ENCODE measurements at regions of chr1 and their contacts with region 1.

Region 1: DNA sequence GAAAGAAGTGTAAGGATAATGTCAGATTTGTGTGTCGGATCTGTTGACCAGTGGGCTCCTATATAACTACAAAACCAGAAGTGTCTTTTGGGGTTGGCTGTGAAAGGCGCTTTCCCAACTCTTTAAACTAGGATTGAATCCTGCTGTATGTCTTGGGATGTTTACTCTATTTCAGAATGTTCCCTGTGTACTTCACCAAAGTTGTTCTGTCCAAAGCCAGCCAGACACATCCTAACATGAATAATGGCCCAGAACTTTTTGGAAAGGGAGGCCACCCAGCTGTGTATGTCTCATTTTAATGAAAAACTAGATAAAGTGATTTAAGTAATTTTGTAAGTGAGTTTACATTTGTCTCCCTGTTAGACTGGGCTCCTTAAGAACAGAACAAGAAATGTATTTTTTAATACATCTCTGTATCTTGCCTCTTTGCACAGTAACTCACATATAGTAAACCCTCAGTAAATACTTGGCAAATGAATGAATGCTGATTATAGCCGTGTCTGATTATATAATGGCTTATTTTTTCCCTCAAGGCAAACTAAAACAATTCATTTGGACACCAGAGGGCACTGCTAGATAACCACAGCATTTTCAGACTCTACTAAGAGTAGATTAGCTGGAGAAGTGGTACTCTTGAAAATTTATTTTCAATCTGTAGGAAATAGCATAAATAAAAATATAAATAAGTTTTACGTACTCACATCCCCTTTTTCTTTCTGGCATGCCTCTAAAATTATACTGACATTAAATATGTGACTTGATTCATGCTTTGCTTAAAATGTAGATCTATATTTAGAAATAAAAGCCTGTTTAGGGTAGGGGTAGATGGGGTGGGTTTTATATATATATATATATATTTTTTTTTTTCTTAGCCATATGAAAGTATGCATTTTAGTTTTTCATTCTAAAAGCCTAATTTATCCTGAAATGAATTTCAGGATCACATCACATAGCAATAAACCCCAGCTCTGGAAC is 23.8 kb downstream of the TSEN15 start:
- DNase-seq: peak in 4 of 14 experiments; percentile 19 to 53 (median 50)
- ATAC-seq: peak; percentile 34
- H3K4me3 ChIP-seq: no peak overlapping the region
- H3K4me3 Mint-ChIP-seq: no peak overlapping the region
- H3K27ac ChIP-seq: no peak overlapping the region
- H3K27ac Mint-ChIP-seq: peak overlapping the region; percentile 25
- H3K4me1 ChIP-seq: no peaks in the 10 kb centered on the region
- H3K4me1 Mint-ChIP-seq: no peaks in the 10 kb centered on the region
- H3K27me3 ChIP-seq: no peaks in the 10 kb centered on the region
- H3K27me3 Mint-ChIP-seq: no peaks in the 10 kb centered on the region
- CTCF ChIP-seq: peak; percentile 56

Region 2: GRCh38 chr1:183148599-183148998 is 926.7 kb before region 1 on chr1:
- CTCF ChIA-PET with region 1: no interaction called
- POLR2A ChIA-PET with region 1: no interaction called
- intact Hi-C with region 1: no loop called
- DNase-seq: no peak
- ATAC-seq: no peak
- H3K4me3 ChIP-seq: no peak overlapping the region
- H3K4me3 Mint-ChIP-seq: no peak overlapping the region
- H3K27ac ChIP-seq: no peak overlapping the region
- H3K27ac Mint-ChIP-seq: no peak overlapping the region
- H3K4me1 ChIP-seq: no peaks in the 10 kb centered on the region
- H3K4me1 Mint-ChIP-seq: no peaks in the 10 kb centered on the region
- H3K27me3 ChIP-seq: peaks cover 0 to 5% of the 10 kb centered on the region in 2 experiments
- H3K27me3 Mint-ChIP-seq: peaks cover 10% of the 10 kb centered on the region
- CTCF ChIP-seq: no peak

Region 3: DNA sequence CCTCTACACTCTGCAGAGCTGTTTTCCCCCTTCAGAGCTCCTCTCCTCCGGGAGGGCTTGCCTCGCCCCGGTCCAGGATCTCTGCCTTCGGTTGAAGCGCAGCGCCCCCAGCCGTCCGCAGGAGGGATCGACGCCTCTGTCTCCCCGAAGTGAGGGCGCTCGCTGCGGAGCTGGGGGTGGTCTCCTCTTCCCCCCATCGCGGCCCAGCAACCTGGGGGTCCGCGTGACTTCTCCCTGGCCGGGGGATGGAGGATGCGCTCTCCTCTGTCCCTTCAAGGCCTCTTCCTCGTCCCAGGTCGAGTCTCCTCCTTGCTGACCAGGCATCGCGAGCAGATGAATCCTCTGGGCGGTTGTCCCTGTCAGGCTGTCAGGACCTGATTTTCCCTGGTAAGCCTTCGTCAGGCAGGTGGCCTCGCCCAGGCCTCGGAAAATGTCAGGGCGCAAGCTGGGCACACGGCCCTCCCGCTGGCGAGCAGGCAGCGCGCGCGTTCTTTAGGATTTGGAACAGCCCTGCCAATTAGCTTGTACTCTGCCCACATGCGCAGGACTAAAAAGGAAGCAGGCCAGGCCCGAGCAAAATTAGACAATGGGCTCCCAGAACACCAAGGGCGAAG is 588.8 kb after region 1 on chr1:
- CTCF ChIA-PET with region 1: no interaction called
- POLR2A ChIA-PET with region 1: no interaction called
- intact Hi-C with region 1: loop called in 1 of 2 experiments (anchors 10 kb)
- DNase-seq: peak in 7 of 14 experiments; percentile 1 to 54 (median 13)
- ATAC-seq: no peak
- H3K4me3 ChIP-seq: peak overlapping the region; percentile 15
- H3K4me3 Mint-ChIP-seq: no peak overlapping the region
- H3K27ac ChIP-seq: no peak overlapping the region
- H3K27ac Mint-ChIP-seq: no peak overlapping the region
- H3K4me1 ChIP-seq: peaks cover 8% of the 10 kb centered on the region
- H3K4me1 Mint-ChIP-seq: no peaks in the 10 kb centered on the region
- H3K27me3 ChIP-seq: peaks cover 7 to 9% of the 10 kb centered on the region in 2 experiments
- H3K27me3 Mint-ChIP-seq: peaks cover 17% of the 10 kb centered on the region
- CTCF ChIP-seq: no peak

Region 4: GRCh38 chr1:184691719-184692324 is 616.5 kb after region 1 on chr1:
- CTCF ChIA-PET with region 1: no interaction called
- POLR2A ChIA-PET with region 1: no interaction called
- intact Hi-C with region 1: loop called in 1 of 2 experiments (anchors 10 kb)
- DNase-seq: peak in 2 of 14 experiments; percentile 3 to 12
- ATAC-seq: no peak
- H3K4me3 ChIP-seq: no peak overlapping the region
- H3K4me3 Mint-ChIP-seq: no peak overlapping the region
- H3K27ac ChIP-seq: no peak overlapping the region
- H3K27ac Mint-ChIP-seq: no peak overlapping the region
- H3K4me1 ChIP-seq: no peaks in the 10 kb centered on the region
- H3K4me1 Mint-ChIP-seq: no peaks in the 10 kb centered on the region
- H3K27me3 ChIP-seq: no peaks in the 10 kb centered on the region
- H3K27me3 Mint-ChIP-seq: no peaks in the 10 kb centered on the region
- CTCF ChIP-seq: peak; percentile 44